Activated naive CD4-positive, alpha-beta T cell treated with anti-CD3 and anti-CD28 coated beads for 36 hours (primary cell): ENCODE measurements at regions of chr1 and their contacts with region 1.

Region 1: GRCh38 chr1:248807067-248807737 is 18.5 kb downstream of the SH3BP5L start:
- DNase-seq: peak; percentile 77
- H3K4me3 Mint-ChIP-seq: no peak overlapping the region
- H3K27ac Mint-ChIP-seq: no peak overlapping the region
- H3K4me1 Mint-ChIP-seq: peaks cover 9% of the 10 kb centered on the region
- H3K27me3 Mint-ChIP-seq: no peaks in the 10 kb centered on the region

Region 2: DNA sequence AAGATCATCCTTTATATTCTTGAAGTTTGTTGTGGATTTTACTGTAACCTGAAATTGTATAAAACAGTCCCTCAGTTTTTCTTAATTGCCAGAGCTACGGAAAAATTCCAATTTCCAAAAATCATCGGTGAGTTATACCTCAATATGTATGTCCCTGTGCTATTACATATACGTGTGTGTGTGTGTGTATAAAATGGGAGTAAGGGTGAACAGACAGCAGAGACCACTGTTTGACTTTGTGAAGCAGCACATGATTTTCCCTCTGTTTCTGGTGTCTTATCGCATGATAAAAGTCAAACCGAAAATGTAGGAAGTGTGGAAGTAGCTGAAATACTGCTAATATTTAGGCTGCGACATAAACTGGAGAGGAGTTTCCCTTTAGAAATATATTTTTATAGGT is 403.2 kb before region 1 on chr1:
- CTCF ChIA-PET with region 1: interaction called, 6 read pairs
- intact Hi-C with region 1: loop called (anchors 1 kb)
- DNase-seq: no peak
- H3K4me3 Mint-ChIP-seq: no peak overlapping the region
- H3K27ac Mint-ChIP-seq: no peak overlapping the region
- H3K4me1 Mint-ChIP-seq: no peaks in the 10 kb centered on the region
- H3K27me3 Mint-ChIP-seq: no peaks in the 10 kb centered on the region

Region 3: GRCh38 chr1:248596615-248597014 is 210.6 kb before region 1 on chr1:
- CTCF ChIA-PET with region 1: no interaction called
- intact Hi-C with region 1: no loop called
- DNase-seq: no peak
- H3K4me3 Mint-ChIP-seq: no peak overlapping the region
- H3K27ac Mint-ChIP-seq: no peak overlapping the region
- H3K4me1 Mint-ChIP-seq: peaks cover 7% of the 10 kb centered on the region
- H3K27me3 Mint-ChIP-seq: no peaks in the 10 kb centered on the region

Region 4: DNA sequence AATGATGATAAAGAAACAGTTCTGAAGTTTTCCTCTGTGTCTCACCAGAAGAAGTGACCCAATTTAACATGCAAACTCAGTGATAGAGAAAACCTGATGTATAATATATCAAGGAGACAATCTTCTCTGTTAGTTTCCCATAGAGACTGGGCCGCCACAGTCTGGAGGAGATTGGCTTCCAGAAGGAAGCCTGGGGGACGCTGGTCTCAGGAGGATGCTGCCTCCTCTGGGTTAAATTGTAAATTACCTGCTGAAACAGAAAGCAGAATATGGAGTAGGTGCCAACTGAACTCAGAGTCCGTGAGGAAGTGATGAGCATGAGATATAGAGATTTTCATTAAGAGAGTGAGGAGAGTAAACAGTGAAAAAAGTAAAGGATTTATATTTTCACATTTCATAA is 120.4 kb before region 1 on chr1:
- CTCF ChIA-PET with region 1: interaction called, 3 read pairs
- intact Hi-C with region 1: loop called (anchors 1 kb)
- DNase-seq: peak; percentile 44
- H3K4me3 Mint-ChIP-seq: no peak overlapping the region
- H3K27ac Mint-ChIP-seq: no peak overlapping the region
- H3K4me1 Mint-ChIP-seq: peaks cover 6% of the 10 kb centered on the region
- H3K27me3 Mint-ChIP-seq: peaks cover 8% of the 10 kb centered on the region

Region 5: GRCh38 chr1:248703674-248704073 is 103.5 kb before region 1 on chr1:
- CTCF ChIA-PET with region 1: interaction called, 5 read pairs
- intact Hi-C with region 1: loop called (anchors 1 kb)
- DNase-seq: no peak
- H3K4me3 Mint-ChIP-seq: no peak overlapping the region
- H3K27ac Mint-ChIP-seq: no peak overlapping the region
- H3K4me1 Mint-ChIP-seq: no peaks in the 10 kb centered on the region
- H3K27me3 Mint-ChIP-seq: peaks cover 9% of the 10 kb centered on the region